HepG2 (cell line): ENCODE measurements at regions of chr22 and their contacts with region 1.

Region 1: GRCh38 chr22:25898689-25899365 is 156.8 kb downstream of the MYO18B start:
- DNase-seq: peak; percentile 9
- ATAC-seq: no peak
- H3K4me3 ChIP-seq: no peak overlapping the region
- H3K27ac ChIP-seq: no peak overlapping the region
- H3K4me1 ChIP-seq: no peaks in the 10 kb centered on the region
- H3K27me3 ChIP-seq: no peaks in the 10 kb centered on the region
- CTCF ChIP-seq: 0 out of 2 replicates have a peak, but pooled peaks have one; percentile 22
- EP300 ChIP-seq: no peak
- POLR2A ChIP-seq: no peak
- RAD21 ChIP-seq: no peak

Region 2: DNA sequence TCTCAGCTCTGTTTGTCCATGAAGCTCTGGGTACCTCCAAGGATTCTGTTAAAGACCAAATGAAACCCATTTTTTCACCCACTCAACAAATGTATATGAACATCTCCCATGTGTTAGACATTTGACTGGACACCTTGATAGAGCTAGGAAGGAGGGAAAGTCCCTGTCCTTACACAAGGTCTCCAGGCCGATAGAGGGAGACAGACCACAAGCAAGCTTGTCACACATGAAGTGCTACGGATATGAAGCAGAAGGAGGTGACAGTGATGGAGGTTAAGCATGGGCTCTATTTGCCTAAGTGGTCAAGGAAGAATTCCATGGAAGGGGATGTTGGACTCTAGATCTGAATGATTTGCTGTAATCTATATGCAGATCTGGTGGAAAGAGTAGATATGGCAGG is 18.3 kb before region 1 on chr22:
- CTCF ChIA-PET with region 1: no interaction called
- POLR2A ChIA-PET with region 1: no interaction called
- in situ Hi-C with region 1: no loop called
- intact Hi-C with region 1: no loop called
- DNase-seq: peak; percentile 21
- ATAC-seq: peak; percentile 56; the same call in 2 of the 3 replicates
- H3K4me3 ChIP-seq: no peak overlapping the region
- H3K27ac ChIP-seq: no peak overlapping the region
- H3K4me1 ChIP-seq: peaks cover 10% of the 10 kb centered on the region
- H3K27me3 ChIP-seq: peaks cover 0 to 3% of the 10 kb centered on the region in 2 experiments; a peak in 1 of 5 replicates
- CTCF ChIP-seq: peak; percentile 70
- EP300 ChIP-seq: no peak
- POLR2A ChIP-seq: no peak
- RAD21 ChIP-seq: no peak

Region 3: GRCh38 chr22:25911243-25911972 is 12.6 kb after region 1 on chr22:
- CTCF ChIA-PET with region 1: no interaction called
- POLR2A ChIA-PET with region 1: no interaction called
- in situ Hi-C with region 1: no loop called
- intact Hi-C with region 1: no loop called
- DNase-seq: no peak
- ATAC-seq: no peak
- H3K4me3 ChIP-seq: no peak overlapping the region
- H3K27ac ChIP-seq: no peak overlapping the region
- H3K4me1 ChIP-seq: no peaks in the 10 kb centered on the region
- H3K27me3 ChIP-seq: peaks cover 0 to 20% of the 10 kb centered on the region in 2 experiments; a peak in 2 of 5 replicates
- CTCF ChIP-seq: no peak
- EP300 ChIP-seq: no peak
- POLR2A ChIP-seq: no peak
- RAD21 ChIP-seq: no peak

Region 4: DNA sequence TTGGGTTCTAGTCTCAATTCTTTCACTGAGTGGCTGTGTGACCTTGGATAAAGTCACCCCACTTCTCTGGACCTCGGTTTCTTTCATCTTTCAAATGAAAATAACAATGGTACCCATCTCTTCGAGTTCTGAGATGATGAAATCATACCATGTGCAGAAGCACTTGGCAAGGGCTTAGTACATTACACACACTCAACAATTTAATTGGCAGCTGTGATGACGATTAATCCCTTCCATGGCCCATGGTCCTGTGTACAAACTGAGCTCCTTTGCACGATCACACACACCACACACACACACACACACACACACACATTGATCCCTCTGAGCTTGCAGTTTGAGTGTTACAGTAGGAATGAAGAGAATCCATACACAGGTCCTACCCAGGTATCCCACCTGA is 426.8 kb after region 1 on chr22:
- CTCF ChIA-PET with region 1: interaction called, 12 read pairs
- POLR2A ChIA-PET with region 1: no interaction called
- in situ Hi-C with region 1: loop called (anchors 5 kb)
- intact Hi-C with region 1: no loop called
- DNase-seq: no peak
- ATAC-seq: no peak
- H3K4me3 ChIP-seq: no peak overlapping the region
- H3K27ac ChIP-seq: no peak overlapping the region
- H3K4me1 ChIP-seq: no peaks in the 10 kb centered on the region
- H3K27me3 ChIP-seq: peaks cover 0 to 19% of the 10 kb centered on the region in 2 experiments; a peak in 4 of 5 replicates
- CTCF ChIP-seq: no peak
- EP300 ChIP-seq: no peak
- POLR2A ChIP-seq: no peak
- RAD21 ChIP-seq: no peak